Ovary (tissue), 10 donors: ENCODE measurements at regions of chr9 and their contacts with region 1.

Region 1: GRCh38 chr9:109903515-109904138 is 123.6 kb downstream of the PALM2AKAP2 start:
- DNase-seq: peak; percentile 39 to 67 (median 56)
- H3K4me3 ChIP-seq: no peak overlapping the region
- H3K27ac ChIP-seq: no peak overlapping the region
- H3K4me1 ChIP-seq: no peaks in the 10 kb centered on the region
- H3K27me3 ChIP-seq: no peaks in the 10 kb centered on the region
- CTCF ChIP-seq: peak in 2 of 3 donors; percentile 66 to 67
- EP300 ChIP-seq: no peak
- POLR2A ChIP-seq: no peak

Region 2: GRCh38 chr9:109708451-109708945 is 195.1 kb before region 1 on chr9:
- intact Hi-C with region 1: no loop called
- DNase-seq: no peak
- H3K4me3 ChIP-seq: no peak overlapping the region
- H3K27ac ChIP-seq: no peak overlapping the region
- H3K4me1 ChIP-seq: peaks cover 3% of the 10 kb centered on the region
- H3K27me3 ChIP-seq: no peaks in the 10 kb centered on the region
- CTCF ChIP-seq: no peak
- EP300 ChIP-seq: no peak
- POLR2A ChIP-seq: no peak

Region 3: GRCh38 chr9:110152704-110153374 is 249.2 kb after region 1 on chr9:
- intact Hi-C with region 1: loop called (anchors 2 to 5 kb)
- DNase-seq: no peak
- H3K4me3 ChIP-seq: no peak overlapping the region
- H3K27ac ChIP-seq: no peak overlapping the region
- H3K4me1 ChIP-seq: no peaks in the 10 kb centered on the region
- H3K27me3 ChIP-seq: no peaks in the 10 kb centered on the region
- CTCF ChIP-seq: peak; percentile 47 to 64 (median 56)
- EP300 ChIP-seq: no peak
- POLR2A ChIP-seq: no peak

Region 4: DNA sequence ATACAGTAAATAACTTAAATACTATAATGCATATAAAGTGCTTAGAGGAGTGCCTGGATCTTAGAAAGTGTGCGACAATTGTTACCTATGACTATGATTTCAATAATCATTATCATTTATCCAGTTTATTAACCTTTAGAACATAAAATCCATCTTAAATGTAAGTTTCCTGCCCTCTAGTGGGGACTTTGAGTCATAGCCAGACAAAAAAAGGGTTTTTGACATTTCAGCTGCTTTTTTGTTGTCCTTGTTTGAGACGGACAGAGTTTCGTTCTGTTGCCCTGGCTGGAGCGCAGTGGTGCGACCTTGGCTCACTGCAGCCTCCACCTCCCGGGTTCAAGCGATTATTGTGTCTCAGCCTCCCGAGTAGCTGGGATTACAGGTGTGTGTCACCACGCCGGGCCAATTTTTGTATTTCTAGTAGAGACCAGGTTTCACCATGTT is 314.1 kb after region 1 on chr9:
- intact Hi-C with region 1: loop called in 2 of 4 experiments (anchors 5 to 10 kb)
- DNase-seq: no peak
- H3K4me3 ChIP-seq: no peak overlapping the region
- H3K27ac ChIP-seq: no peak overlapping the region
- H3K4me1 ChIP-seq: no peaks in the 10 kb centered on the region
- H3K27me3 ChIP-seq: no peaks in the 10 kb centered on the region
- CTCF ChIP-seq: peak; percentile 57 to 76 (median 60)
- EP300 ChIP-seq: no peak
- POLR2A ChIP-seq: no peak